ENCODE measurements at regions of chr10 and their contacts with region 1.

Region 1: DNA sequence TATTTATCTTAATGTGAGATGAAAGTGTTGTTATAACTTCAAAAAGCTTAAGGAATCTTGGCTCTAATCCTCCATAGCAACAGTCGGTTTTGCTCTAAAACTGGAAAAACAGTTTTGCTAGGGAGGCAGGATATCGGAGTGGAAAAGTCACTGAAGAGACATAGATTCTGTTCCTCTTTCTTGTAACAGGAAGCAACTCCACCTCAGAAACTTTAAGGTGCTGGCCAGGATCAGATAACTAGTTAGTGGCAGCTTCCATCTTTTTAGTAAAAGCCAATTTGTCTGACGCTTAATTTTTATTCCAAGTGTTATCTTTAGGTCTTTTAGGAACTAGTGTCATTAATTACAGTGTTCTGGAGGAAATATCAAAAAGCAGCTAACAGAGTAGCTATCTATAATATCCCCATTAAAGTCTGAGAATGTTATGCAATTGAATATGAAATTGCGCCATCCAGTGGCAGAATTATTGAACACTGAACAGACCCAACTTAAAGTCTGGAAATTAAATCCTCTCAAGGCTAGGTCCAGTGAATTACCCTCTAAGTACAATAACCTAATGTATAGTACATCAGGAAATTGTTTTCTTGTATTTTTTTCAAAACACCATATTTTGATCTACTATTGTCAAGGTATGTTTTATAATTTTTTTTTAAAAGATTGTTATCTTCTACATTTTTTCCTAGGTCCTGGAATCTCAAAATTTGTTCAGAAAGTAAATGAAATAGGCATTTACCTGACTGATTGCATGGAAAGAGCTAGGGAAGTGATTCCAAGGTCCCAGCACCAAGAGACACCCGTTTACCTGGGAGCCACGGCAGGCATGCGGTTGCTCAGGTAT is 65.9 kb upstream of the CC2D2B start:
- DNase-seq: no peak
- H3K4me3 ChIP-seq: no peak overlapping the region
- H3K27ac ChIP-seq: no peak overlapping the region
- H3K4me1 ChIP-seq: no peaks in the 10 kb centered on the region
- H3K27me3 ChIP-seq: no peaks in the 10 kb centered on the region
- CTCF ChIP-seq: peak in 1 of 3 donors; percentile 37
- EP300 ChIP-seq: no peak
- POLR2A ChIP-seq: no peak

Region 2: GRCh38 chr10:95423164-95424005 is 418.5 kb before region 1 on chr10:
- intact Hi-C with region 1: no loop called
- DNase-seq: no peak
- H3K4me3 ChIP-seq: no peak overlapping the region
- H3K27ac ChIP-seq: no peak overlapping the region
- H3K4me1 ChIP-seq: no peaks in the 10 kb centered on the region
- H3K27me3 ChIP-seq: no peaks in the 10 kb centered on the region
- CTCF ChIP-seq: no peak
- EP300 ChIP-seq: no peak
- POLR2A ChIP-seq: no peak

Region 3: DNA sequence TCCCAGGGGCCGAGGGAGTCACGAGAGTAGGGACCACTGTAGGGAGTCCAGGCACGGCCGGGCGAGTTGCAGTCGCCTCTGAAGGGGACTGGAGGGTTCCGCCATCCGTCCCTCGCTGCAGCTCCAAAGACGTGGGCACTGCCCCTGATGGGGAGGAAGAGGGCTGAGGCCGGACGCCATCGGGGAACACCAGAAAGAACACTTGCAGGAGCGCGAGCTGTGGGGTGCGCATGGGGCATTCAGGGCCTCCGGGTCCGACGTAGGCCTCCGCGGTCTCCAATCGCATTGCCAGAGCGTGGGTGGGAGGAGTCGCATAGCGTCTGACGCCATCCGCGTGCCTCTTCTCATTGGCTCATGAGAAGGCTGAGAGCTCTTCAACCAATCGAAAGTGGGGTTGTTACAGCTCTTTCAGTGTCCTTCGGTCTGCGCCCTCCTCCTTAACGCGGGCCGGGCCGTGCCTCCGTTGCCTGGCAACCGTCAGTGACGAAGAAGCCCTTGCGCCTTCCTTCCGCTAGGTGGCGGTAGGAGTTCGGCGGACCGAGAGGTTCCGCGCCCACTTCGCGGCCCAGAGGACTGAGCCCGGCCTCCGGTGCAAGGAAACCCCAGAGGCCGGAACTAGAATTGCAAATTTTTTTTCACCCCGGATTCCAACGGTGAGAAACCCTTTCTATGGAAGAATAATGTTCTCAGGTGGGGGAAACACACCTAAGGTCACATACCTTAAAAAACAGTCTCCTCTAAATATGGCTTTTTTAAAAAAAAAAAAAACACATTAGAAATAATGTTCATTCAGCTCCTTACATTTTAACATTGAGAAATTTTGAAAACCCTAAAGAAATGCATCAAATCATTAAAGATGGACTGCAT is 148.0 kb before region 1 on chr10 and contains the start of gene TCTN3:
- intact Hi-C with region 1: loop called in 1 of 4 experiments (anchors 2 kb)
- DNase-seq: peak; percentile 94 to 97 (median 95)
- H3K4me3 ChIP-seq: peak within 1 kb of the TSS; percentile 71
- H3K27ac ChIP-seq: peak within 1 kb of the TSS; percentile 81 to 82
- H3K4me1 ChIP-seq: no peaks in the 10 kb centered on the region
- H3K27me3 ChIP-seq: no peaks in the 10 kb centered on the region
- CTCF ChIP-seq: peak; percentile 98 to 100 (median 99)
- EP300 ChIP-seq: no peak
- POLR2A ChIP-seq: peak; percentile 77
- total RNA-seq, gene TCTN3: 24.1 to 44.7 (median 34.2) TPM

Region 4: GRCh38 chr10:95755511-95756004 is 86.3 kb before region 1 on chr10:
- intact Hi-C with region 1: loop called in 1 of 4 experiments (anchors 10 kb)
- DNase-seq: no peak
- H3K4me3 ChIP-seq: peak overlapping the region; percentile 30
- H3K27ac ChIP-seq: no peak overlapping the region
- H3K4me1 ChIP-seq: no peaks in the 10 kb centered on the region
- H3K27me3 ChIP-seq: no peaks in the 10 kb centered on the region
- CTCF ChIP-seq: no peak
- EP300 ChIP-seq: no peak
- POLR2A ChIP-seq: no peak

Region 5: GRCh38 chr10:95783741-95784140 is 58.1 kb before region 1 on chr10:
- intact Hi-C with region 1: no loop called
- DNase-seq: no peak
- H3K4me3 ChIP-seq: no peak overlapping the region
- H3K27ac ChIP-seq: no peak overlapping the region
- H3K4me1 ChIP-seq: no peaks in the 10 kb centered on the region
- H3K27me3 ChIP-seq: no peaks in the 10 kb centered on the region
- CTCF ChIP-seq: no peak
- EP300 ChIP-seq: no peak
- POLR2A ChIP-seq: no peak